ENCODE measurements at regions of chr14 and their contacts with region 1.

Region 1: DNA sequence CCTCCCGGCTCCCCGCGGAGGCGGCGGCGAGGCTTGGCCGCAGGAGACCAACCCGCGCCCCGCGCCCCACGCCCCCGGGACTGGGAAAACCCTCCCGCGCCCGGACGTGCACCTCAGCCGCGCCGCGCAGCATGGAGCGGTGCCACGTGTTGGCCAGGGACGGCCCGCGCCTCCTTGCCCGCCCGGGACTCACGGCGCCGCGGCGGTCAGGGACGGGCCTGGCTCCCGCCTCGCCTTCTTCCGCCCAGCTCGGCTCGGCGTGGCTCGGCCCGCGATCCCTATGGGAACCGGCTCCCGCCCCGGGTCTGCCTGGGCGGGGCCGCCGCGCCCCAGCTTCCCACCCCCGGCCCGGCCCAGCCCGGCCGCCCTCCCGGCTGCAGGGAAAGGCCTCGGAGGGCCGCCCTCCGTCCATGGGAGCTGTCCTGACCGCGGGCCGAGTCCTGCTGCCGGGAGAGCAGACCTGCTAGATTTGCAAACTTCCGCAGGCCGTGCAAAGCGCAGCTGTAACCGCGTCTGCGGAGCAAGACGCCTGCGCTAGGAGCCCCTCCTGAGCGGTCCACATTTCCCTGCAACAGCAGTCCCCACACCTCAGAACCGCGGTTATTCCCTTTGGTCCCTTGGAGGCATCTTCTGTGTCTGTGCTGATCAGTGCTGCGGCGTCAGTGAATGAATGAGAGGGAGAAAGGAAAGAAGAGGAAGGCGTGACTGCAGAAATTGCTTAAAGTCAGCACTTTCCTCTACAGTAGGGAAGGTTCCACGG is at the start of gene CDKL1:
- DNase-seq: peak; percentile 61 to 83 (median 76)
- H3K4me3 ChIP-seq: peak within 1 kb of the TSS; percentile 55
- H3K27ac ChIP-seq: peak within 1 kb of the TSS; percentile 57 to 90
- H3K4me1 ChIP-seq: peaks cover 20% of the 10 kb centered on the region
- H3K27me3 ChIP-seq: no peaks in the 10 kb centered on the region
- CTCF ChIP-seq: no peak
- EP300 ChIP-seq: no peak
- POLR2A ChIP-seq: peak; percentile 48
- total RNA-seq, gene CDKL1: 17.6 to 69.3 (median 34.1) TPM

Region 2: DNA sequence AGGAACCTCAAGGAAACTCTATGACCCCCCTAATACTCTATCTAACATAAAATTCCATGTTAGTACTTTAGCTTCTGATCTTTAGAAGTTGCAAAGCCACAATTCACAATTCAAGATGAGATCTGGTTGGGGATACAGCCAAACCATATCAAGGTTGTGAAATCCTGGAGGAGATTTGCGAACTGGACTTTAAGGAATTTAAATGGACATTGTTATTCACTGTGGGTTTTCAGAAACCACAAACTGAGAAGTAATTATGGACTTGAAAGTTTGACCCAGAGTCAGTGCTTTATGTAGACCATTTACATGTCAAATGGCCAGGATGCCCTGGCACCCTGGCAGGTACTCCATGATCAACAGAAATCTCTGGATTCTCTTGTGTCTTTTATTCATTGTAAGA is 14.1 kb after region 1 on chr14:
- intact Hi-C with region 1: no loop called
- DNase-seq: no peak
- H3K4me3 ChIP-seq: no peak overlapping the region
- H3K27ac ChIP-seq: no peak overlapping the region
- H3K4me1 ChIP-seq: peaks cover 9% of the 10 kb centered on the region
- H3K27me3 ChIP-seq: no peaks in the 10 kb centered on the region
- CTCF ChIP-seq: no peak
- EP300 ChIP-seq: no peak
- POLR2A ChIP-seq: no peak

Region 3: GRCh38 chr14:50532502-50533240 is 135.9 kb after region 1 on chr14 and contains the start of gene MAP4K5:
- intact Hi-C with region 1: loop called in 1 of 4 experiments (anchors 10 kb)
- DNase-seq: peak; percentile 90 to 93 (median 92)
- H3K4me3 ChIP-seq: peak within 1 kb of the TSS; percentile 85
- H3K27ac ChIP-seq: peak within 1 kb of the TSS; percentile 93 to 97
- H3K4me1 ChIP-seq: peaks cover 11% of the 10 kb centered on the region
- H3K27me3 ChIP-seq: no peaks in the 10 kb centered on the region
- CTCF ChIP-seq: peak; percentile 60 to 98 (median 98)
- EP300 ChIP-seq: no peak
- POLR2A ChIP-seq: peak; percentile 70
- total RNA-seq, gene MAP4K5: 60.8 to 202 (median 69.8) TPM

Measured in ovary (tissue), 10 donors.